Activated CD4-positive, alpha-beta T cell treated with anti-CD3 and anti-CD28 coated beads, Interleukin-2, amount 10 ng/mL, durations not matched to agents 24 days and 14 days (primary cell): ENCODE measurements at regions of chr17 and their contacts with region 1.

Region 1: DNA sequence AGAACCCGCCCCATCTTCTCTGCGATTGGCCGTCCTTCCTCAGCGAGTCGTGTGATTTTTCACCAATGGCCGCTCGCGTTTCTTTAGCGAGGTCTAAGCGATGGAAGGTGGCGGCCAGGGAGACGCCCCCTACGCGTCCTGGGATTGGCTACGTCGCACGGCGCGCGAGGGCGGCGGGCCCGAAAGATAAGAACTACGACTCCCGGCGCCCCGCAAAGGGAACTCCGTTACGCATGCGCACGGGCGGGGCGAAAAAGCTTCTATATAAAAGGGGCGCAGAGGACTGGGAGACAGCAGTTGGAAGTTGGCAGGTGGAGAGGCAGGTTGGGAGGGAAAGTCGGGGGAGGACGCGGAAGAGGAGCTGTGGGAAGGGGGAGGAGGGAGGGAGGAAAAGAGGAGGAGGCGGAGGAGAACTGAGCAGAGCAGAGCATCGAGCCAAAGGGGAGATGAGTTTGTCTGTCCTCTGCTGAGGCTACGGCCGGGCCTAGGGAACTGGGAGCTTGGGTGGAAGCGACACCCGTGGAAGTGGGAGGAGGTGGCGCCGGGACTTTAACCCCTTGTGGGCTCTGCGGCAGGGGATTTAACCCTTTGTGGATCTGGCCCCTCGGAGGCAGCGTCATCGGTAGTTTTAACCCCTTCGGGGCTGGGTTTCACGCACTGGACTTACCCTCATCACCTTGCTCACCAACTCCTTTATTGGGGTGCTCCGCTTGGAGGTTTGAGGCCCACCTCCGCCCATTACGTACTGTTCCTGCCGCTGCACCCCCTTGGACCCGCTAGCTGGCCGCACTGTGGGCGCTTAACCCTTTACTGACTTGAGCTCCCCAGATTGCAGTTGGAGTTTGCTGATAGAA is at the start of gene HEXIM1:
- DNase-seq: peak; percentile 100
- H3K4me3 Mint-ChIP-seq: peak within 1 kb of the TSS; percentile 98
- H3K27ac Mint-ChIP-seq: peak within 1 kb of the TSS; percentile 99
- H3K4me1 Mint-ChIP-seq: peaks cover 44% of the 10 kb centered on the region
- H3K27me3 Mint-ChIP-seq: peaks cover 3% of the 10 kb centered on the region
- total RNA-seq, gene HEXIM1: 47.3 and 48.0 TPM in 2 replicates

Region 2: DNA sequence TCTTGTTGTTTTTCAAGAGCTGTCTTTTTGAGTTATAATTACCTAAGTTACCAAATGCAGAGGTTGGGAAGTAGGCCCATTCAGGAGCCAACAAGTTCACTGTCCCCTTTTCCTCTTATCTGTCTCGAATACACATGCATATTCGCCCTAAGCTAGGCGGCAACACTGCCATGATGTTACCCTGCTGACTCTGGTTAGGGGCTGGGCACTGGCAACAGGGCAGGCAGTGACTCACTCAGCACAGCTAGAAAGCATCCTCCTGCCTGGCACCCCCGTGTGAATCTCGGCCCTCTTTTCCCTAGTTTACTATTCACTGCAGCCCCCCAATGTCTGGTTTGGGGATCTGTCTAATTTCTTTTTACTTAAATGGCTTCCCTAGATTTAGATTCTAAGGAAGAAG is 426.2 kb before region 1 on chr17:
- intact Hi-C with region 1: no loop called
- DNase-seq: no peak
- H3K4me3 Mint-ChIP-seq: no peak overlapping the region
- H3K27ac Mint-ChIP-seq: no peak overlapping the region
- H3K4me1 Mint-ChIP-seq: no peaks in the 10 kb centered on the region
- H3K27me3 Mint-ChIP-seq: no peaks in the 10 kb centered on the region

Region 3: DNA sequence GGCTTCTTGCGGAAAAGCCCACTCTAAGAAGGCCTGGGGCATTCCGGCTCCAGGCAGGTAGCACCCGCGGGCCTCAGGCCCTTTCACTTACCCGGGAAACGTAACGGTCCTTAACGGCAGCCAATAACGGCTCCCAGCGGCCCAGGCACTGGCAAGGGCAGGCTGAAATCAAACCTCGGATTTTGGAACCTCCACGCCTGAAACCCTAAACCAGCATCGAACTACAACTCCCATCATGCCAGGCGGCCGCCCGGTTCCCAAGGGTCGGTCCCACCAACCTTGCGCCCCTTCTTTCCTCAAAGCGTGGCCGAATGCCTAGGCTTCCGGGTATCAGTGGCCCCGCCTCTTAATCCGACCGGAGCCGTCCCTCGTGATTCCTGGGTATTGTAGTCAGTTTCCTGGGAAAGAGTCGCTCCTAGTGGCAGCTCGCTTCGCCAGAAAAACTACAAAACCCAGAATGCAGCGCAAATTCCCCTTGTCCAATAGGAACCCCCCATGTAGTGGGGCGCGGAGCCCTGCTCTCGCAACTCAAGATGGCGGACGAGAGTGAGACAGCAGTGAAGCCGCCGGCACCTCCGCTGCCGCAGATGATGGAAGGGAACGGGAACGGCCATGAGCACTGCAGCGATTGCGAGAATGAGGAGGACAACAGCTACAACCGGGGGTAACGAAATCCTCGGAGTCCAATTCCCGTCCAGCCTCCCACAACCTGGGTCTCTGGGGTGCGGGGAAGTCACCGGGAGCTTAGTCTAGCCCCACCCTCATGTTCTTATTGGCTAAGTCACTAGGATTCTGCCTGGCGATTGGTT is 87.4 kb before region 1 on chr17 and contains the start of gene NMT1:
- intact Hi-C with region 1: loop called (anchors 5 kb)
- DNase-seq: peak; percentile 99
- H3K4me3 Mint-ChIP-seq: peak within 1 kb of the TSS; percentile 91
- H3K27ac Mint-ChIP-seq: peak within 1 kb of the TSS; percentile 100
- H3K4me1 Mint-ChIP-seq: peaks cover 29% of the 10 kb centered on the region
- H3K27me3 Mint-ChIP-seq: no peaks in the 10 kb centered on the region
- total RNA-seq, gene NMT1: 176 and 182 TPM in 2 replicates

Region 4: DNA sequence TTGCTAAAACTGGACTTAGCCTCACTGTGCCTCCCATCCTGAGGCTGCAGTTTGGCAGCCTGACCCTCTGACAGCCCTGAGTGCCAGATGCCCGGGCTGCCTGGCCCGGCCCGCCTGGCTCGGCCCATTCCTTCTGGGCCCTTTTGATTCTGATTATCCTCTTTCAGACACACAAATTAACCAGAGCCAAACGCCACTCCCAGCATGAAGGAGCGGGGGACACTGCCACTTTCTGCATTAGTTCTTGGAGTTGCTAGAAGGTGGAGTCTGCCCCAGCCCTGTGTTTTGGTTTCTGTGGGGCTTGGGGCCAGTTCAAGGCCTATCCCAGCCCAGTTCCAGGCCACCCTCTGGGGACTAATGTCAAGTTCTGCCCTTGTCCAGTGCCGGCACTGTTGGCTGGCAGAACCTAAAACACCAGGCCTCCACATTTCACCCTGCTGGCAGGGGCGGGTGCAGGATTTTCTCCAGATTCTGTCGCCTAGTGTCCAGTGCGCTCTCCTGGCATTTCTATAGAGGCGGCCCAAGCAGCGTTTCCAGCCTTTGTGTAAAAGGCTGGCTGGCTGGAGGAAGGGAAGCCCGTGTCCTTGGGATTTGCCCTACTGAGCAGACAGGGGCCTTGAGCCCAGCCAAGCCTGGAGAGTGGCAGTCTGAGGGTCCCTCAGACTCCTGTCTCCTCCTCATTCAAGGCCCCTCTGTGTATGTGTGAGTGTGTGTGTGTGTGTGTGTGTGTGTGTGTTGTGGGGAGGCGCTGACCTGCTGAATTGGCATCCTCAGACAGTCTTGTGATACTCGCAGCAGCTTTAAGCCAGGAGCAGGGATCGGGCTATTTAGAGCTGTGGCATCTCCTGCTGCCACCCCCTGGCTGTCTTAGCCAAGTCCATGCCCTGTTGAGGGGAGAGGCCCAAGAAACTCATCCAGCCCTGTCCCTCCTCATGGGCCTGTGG is 37.5 kb before region 1 on chr17:
- intact Hi-C with region 1: no loop called
- DNase-seq: no peak
- H3K4me3 Mint-ChIP-seq: no peak overlapping the region
- H3K27ac Mint-ChIP-seq: no peak overlapping the region
- H3K4me1 Mint-ChIP-seq: peaks cover 2% of the 10 kb centered on the region
- H3K27me3 Mint-ChIP-seq: peaks cover 2% of the 10 kb centered on the region

Region 5: GRCh38 chr17:45161019-45161825 is 12.8 kb after region 1 on chr17:
- intact Hi-C with region 1: loop called (anchors 1 kb)
- DNase-seq: peak; percentile 100
- H3K4me3 Mint-ChIP-seq: peak overlapping the region; percentile 99
- H3K27ac Mint-ChIP-seq: peak overlapping the region; percentile 98
- H3K4me1 Mint-ChIP-seq: peaks cover 38% of the 10 kb centered on the region
- H3K27me3 Mint-ChIP-seq: no peaks in the 10 kb centered on the region

Region 6: DNA sequence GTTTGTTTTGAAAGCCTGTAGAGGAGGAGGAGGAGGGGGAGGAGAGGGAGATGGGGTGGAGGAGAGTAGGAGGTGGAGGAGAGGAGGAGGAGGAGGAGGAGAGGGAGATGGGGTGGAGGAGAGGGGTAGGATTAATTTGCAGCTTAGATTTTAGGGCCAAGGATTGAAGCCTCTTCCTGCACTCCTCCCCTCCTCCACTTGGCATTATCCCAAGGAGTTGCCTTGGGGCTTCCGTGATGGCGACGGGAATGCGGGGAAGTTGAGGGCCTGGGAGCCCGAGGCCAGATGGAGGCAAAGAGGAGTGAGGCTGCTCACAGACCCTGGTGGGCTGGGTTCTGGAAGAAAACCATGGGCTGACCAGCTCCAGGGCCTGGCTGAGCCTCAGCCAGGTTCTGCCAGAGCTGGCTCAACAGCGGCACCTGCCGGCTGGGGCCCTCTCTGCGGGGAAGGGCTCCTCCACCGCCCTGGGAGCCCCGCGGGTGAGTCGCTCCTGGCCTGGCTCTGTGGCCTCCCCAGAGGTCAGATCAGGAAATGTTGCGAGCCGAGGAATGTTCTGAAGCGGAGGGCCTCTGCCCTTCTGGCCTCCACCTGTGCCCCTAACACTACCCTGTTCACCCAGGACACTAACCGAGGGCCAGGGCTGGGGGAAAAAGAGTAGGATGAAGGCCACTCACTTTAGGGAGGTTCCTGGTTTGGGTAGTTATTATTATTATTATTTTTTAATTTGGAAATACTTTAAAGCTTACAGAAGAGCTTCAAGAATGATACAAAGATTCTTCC is 49.3 kb after region 1 on chr17:
- intact Hi-C with region 1: loop called (anchors 5 kb)
- DNase-seq: peak; percentile 97
- H3K4me3 Mint-ChIP-seq: no peak overlapping the region
- H3K27ac Mint-ChIP-seq: no peak overlapping the region
- H3K4me1 Mint-ChIP-seq: peaks cover 3% of the 10 kb centered on the region
- H3K27me3 Mint-ChIP-seq: no peaks in the 10 kb centered on the region

Region 7: GRCh38 chr17:45228763-45229539 is 80.5 kb after region 1 on chr17:
- intact Hi-C with region 1: loop called (anchors 2 kb)
- DNase-seq: peak; percentile 94
- H3K4me3 Mint-ChIP-seq: peak overlapping the region; percentile 99
- H3K27ac Mint-ChIP-seq: peak overlapping the region; percentile 94
- H3K4me1 Mint-ChIP-seq: peaks cover 81% of the 10 kb centered on the region
- H3K27me3 Mint-ChIP-seq: no peaks in the 10 kb centered on the region

Region 8: GRCh38 chr17:45310380-45311324 is 162.2 kb after region 1 on chr17:
- intact Hi-C with region 1: no loop called
- DNase-seq: no peak
- H3K4me3 Mint-ChIP-seq: peak overlapping the region; percentile 89
- H3K27ac Mint-ChIP-seq: peak overlapping the region; percentile 95
- H3K4me1 Mint-ChIP-seq: peaks cover 78% of the 10 kb centered on the region
- H3K27me3 Mint-ChIP-seq: no peaks in the 10 kb centered on the region